ENCODE measurements at regions of chr17 and their contacts with region 1.

Region 1: GRCh38 chr17:5478992-5479391 is 7.0 kb downstream of the DERL2 start:
- DNase-seq: no peak
- ATAC-seq: no peak

Region 2: GRCh38 chr17:5281814-5282653 is 197.0 kb before region 1 on chr17 and contains the start of gene RABEP1:
- intact Hi-C with region 1: loop called (anchors 5 kb)
- DNase-seq: peak; percentile 96
- ATAC-seq: peak; percentile 97
- total RNA-seq, gene RABEP1: 49.1 TPM

Region 3: DNA sequence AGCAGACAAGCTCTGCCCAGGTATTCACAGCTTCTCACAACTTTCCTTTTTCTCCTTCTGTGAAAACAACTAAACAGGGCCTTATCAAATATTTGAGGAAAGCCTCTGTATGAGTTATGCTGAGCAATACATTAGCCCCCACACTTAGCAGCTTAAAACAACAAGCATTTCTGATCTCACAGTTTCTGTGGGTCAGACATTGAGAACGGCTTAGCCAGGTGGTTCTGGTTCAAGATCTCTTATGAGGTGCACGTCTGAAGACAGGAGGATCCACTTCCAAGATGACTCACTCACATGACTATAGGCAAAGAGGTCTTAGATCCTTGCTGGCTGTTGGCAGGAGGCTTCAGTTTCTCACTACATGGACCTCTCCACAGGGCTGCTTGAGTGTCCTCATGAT is 409.8 kb after region 1 on chr17:
- intact Hi-C with region 1: no loop called
- DNase-seq: no peak
- ATAC-seq: no peak

Region 4: DNA sequence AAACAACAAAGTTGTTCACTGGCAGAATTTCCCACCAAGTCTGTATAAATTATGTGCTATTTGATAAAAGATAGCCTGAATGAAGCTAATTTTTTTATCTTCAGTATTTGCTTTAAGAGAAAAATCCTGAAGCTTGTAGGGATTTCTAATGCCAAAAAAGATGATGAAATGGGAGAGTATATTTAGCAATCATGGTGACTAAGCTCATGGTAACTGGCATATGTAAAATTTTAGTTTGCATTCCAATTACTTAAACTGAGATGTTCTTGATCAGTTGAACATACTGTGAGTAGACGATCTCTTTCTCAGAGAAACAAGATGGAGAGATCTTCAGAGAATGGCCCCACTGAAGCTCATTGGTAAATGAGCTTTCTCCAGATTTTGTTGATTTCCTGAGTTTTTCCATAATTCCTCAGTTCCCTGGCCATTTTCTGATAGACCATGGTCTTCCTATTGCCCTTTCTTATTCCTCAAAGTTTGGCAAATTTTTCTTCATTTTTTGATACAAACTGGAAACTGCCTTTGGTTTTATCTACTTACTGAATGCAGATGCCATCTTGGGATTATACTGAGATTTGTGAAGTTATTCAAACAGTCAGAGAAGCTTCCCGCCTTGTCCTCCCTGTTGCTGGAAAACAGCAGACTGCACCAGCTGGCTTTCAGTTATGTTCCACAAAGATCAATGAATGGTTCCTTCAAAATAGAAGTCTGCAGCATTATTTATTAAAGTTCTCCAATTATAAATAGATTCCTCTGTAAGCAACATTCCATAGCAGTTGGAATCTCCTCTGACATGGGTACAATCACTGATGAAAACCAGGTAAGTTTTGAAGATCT is 1448.5 kb after region 1 on chr17:
- intact Hi-C with region 1: no loop called
- DNase-seq: no peak
- ATAC-seq: no peak